Right cardiac atrium (tissue), 5 donors: ENCODE measurements at regions of chr6 and their contacts with region 1.

Region 1: DNA sequence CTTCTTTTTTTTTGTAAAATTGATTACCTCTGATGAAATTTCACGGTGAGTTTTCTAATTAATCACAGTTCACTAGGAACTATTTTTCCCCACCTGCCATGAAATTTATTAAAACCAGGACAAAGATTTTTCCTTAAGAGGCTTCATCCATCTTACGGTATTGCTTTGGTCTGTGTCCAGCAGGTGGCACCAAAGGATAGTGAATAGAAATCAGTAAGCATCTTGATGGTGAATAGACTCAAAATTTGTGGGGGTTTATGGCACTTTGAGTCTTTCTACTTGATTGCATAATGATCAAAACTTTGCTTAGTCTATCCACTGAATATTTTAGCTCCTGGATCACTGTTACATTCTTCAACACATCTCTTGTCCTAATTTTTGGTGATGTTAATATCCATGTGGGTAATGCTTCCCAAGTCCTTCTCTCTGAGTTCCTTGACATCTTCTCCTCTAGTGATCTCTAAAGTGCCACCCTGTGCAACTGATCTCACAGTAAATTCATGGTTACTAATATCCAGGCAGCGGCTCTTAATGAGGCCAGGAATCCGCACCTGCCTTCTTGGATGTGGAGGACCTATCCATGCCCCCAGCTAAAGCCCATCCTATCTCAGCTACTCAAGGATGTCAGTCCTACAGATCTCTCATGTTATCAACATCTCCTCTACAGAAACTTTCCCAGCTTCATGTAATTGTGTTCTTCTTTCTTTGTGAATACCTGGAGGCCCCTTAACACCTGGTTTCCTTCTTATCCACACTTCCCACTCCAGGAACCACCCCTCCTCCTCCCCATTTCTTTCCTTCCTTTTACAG is 54.5 kb downstream of the STMND1 start:
- DNase-seq: peak in 2 of 3 donors; percentile 50 to 84
- ATAC-seq: peak; percentile 61 to 66
- H3K4me3 ChIP-seq: no peak overlapping the region
- H3K27ac ChIP-seq: no peak overlapping the region
- H3K4me1 ChIP-seq: no peaks in the 10 kb centered on the region
- H3K27me3 ChIP-seq: no peaks in the 10 kb centered on the region

Region 2: GRCh38 chr6:17584241-17584803 is 428.0 kb after region 1 on chr6:
- intact Hi-C with region 1: loop called (anchors 5 kb)
- DNase-seq: no peak
- ATAC-seq: peak; percentile 86 to 87
- H3K4me3 ChIP-seq: no peak overlapping the region
- H3K27ac ChIP-seq: no peak overlapping the region
- H3K4me1 ChIP-seq: peaks cover 2% of the 10 kb centered on the region
- H3K27me3 ChIP-seq: no peaks in the 10 kb centered on the region

Region 3: DNA sequence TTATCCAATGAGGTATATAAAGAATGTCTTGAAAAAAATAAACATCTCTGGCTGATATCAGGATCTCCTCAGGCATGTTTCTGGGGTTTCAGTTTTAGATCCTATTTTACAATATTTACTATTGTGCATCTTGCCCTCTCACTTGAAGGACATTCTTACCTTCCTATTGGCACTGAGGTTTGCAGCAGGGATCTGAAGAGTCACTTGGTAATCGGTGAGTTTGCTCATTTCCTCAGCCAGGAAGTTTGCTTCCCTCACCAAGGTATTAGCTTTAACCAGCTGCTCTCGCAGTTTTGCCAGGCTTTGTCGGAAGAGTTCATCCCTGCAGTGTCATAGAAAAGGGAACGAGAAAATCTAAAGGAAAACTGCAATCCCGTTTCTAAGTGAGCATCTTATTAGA is 652.3 kb after region 1 on chr6:
- intact Hi-C with region 1: loop called in 2 of 4 experiments (anchors 10 kb)
- DNase-seq: no peak
- ATAC-seq: no peak
- H3K4me3 ChIP-seq: no peak overlapping the region
- H3K27ac ChIP-seq: no peak overlapping the region
- H3K4me1 ChIP-seq: no peaks in the 10 kb centered on the region
- H3K27me3 ChIP-seq: no peaks in the 10 kb centered on the region